Heart right ventricle (tissue), 16 donors: ENCODE measurements at regions of chr6 and their contacts with region 1.

Region 1: GRCh38 chr6:127302728-127303660 is 36.3 kb downstream of the RNF146 start:
- DNase-seq: peak in 1 of 2 donors; percentile 14
- ATAC-seq: peak in 2 of 8 donors; percentile 39 to 67
- H3K4me3 ChIP-seq: no peak overlapping the region
- H3K27ac ChIP-seq: no peak overlapping the region
- H3K4me1 ChIP-seq: peaks cover 0 to 41% (median 30%) of the 10 kb centered on the region in 9 donors
- H3K27me3 ChIP-seq: no peaks in the 10 kb centered on the region
- CTCF ChIP-seq: peak; percentile 42 to 80 (median 71)

Region 2: DNA sequence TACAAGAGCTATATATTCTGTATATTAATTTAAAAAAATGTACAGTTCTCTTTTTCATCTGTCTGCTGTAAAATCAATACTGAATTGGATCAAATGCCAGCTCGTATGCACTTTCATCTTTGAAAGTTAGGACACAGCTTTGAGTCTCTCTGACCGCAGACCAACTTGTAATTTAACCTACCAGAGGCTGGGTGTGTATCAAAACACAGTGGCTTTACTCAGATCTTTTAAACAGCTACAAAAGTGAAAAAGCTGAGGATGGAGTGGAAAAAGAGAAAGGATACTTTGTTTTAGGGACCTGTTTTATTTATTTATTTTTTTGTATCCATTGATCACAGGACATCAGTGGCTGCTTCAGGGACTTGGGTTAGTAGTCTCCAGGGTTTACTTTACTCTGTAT is 112.1 kb after region 1 on chr6:
- intact Hi-C with region 1: loop called in 6 of 10 experiments (anchors 5 to 10 kb)
- DNase-seq: no peak
- ATAC-seq: no peak
- H3K4me3 ChIP-seq: no peak overlapping the region
- H3K27ac ChIP-seq: no peak overlapping the region
- H3K4me1 ChIP-seq: peaks cover 0 to 3% (median 0%) of the 10 kb centered on the region in 9 donors
- H3K27me3 ChIP-seq: no peaks in the 10 kb centered on the region
- CTCF ChIP-seq: no peak

Region 3: GRCh38 chr6:127420556-127420955 is 117.6 kb after region 1 on chr6:
- intact Hi-C with region 1: loop called in 6 of 10 experiments (anchors 5 to 10 kb)
- DNase-seq: peak in 1 of 2 donors; percentile 43
- ATAC-seq: peak; percentile 62 to 97 (median 80)
- H3K4me3 ChIP-seq: no peak overlapping the region
- H3K27ac ChIP-seq: peak overlapping the region in 1 of 10 donors; percentile 7
- H3K4me1 ChIP-seq: peaks cover 0 to 15% (median 0%) of the 10 kb centered on the region in 9 donors
- H3K27me3 ChIP-seq: no peaks in the 10 kb centered on the region
- CTCF ChIP-seq: peak in 8 of 9 donors; percentile 31 to 64 (median 60)

Region 4: DNA sequence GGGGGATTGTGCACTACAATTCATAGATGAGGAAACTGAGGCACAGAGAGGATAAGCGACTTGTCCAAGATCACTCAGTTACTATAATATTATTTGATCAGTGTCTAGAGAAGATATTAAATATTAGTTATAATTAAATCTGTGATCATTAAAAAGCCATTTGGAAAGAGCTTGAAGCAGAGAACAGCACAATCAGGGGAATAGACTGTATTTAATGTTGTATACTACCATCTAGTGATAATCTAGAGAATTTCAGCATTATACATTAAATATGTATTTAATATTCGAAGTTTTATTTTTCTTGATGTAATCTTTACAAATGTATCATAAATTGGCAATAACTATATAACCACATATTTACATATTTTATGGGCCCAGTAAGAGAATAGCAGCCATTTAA is 236.3 kb after region 1 on chr6:
- intact Hi-C with region 1: loop called in 5 of 10 experiments (anchors 5 to 10 kb)
- DNase-seq: no peak
- ATAC-seq: no peak
- H3K4me3 ChIP-seq: no peak overlapping the region
- H3K27ac ChIP-seq: no peak overlapping the region
- H3K4me1 ChIP-seq: peaks cover 0 to 3% (median 0%) of the 10 kb centered on the region in 9 donors
- H3K27me3 ChIP-seq: peaks cover 0 to 9% (median 6%) of the 10 kb centered on the region in 7 donors
- CTCF ChIP-seq: peak in 7 of 9 donors; percentile 18 to 63 (median 49)

Region 5: DNA sequence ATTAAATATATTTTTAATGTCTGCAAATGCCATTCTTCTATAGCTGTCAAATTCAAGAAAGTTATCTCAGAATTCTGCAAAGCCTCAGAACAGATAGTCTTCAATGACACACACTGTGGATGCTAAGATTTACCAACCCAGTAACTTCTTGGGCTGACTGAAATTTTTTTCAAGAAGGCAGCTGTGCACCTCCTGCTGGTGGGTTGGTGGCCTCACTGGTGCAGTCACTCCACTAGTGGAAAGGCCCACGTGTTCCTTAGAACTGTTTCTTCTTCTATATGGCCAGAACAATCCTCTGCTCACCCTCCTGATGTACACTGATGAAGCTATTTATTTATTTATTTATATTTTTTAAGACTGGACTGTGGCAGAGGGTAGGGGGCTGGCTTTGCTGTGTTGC is 244.2 kb after region 1 on chr6:
- intact Hi-C with region 1: loop called in 3 of 10 experiments (anchors 10 kb)
- DNase-seq: no peak
- ATAC-seq: no peak
- H3K4me3 ChIP-seq: no peak overlapping the region
- H3K27ac ChIP-seq: no peak overlapping the region
- H3K4me1 ChIP-seq: no peaks in the 10 kb centered on the region
- H3K27me3 ChIP-seq: peaks cover 0 to 16% (median 11%) of the 10 kb centered on the region in 7 donors
- CTCF ChIP-seq: peak in 4 of 9 donors; percentile 10 to 25 (median 16)

Region 6: GRCh38 chr6:127855542-127856159 is 552.7 kb after region 1 on chr6:
- intact Hi-C with region 1: no loop called
- DNase-seq: peak in 1 of 2 donors; percentile 7
- ATAC-seq: no peak
- H3K4me3 ChIP-seq: no peak overlapping the region
- H3K27ac ChIP-seq: no peak overlapping the region
- H3K4me1 ChIP-seq: no peaks in the 10 kb centered on the region
- H3K27me3 ChIP-seq: no peaks in the 10 kb centered on the region
- CTCF ChIP-seq: peak in 7 of 9 donors; percentile 35 to 60 (median 49)